Naive thymus-derived CD4-positive, alpha-beta T cell (primary cell): ENCODE measurements at regions of chr1 and their contacts with region 1.

Region 1: DNA sequence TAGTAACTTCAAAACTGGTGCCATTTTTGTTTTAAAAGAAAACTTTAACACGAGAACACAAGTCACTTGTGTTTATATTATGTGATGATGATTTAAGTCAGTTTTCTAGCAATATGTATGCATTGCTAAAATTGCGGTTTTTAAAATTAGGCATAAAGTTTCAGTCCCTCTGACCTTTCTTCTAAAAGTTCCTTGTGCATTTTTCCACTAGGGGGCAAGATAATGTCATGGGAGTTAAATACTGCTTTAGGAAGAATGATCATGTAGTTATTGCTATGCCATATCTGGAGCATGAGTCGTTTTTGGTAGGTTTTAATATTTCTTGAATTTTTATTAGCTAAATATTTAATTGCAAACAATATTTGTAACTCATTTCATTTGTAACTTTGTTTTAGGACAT is 10.7 kb downstream of the CDC7 start:
- DNase-seq: peak in 6 of 9 donors; percentile 22 to 56 (median 43)
- ATAC-seq: peak; percentile 49
- H3K4me3 ChIP-seq: no peak overlapping the region
- H3K4me3 Mint-ChIP-seq: no peak overlapping the region
- H3K27ac ChIP-seq: no peak overlapping the region
- H3K27ac Mint-ChIP-seq: no peak overlapping the region
- H3K4me1 ChIP-seq: peaks cover 0 to 14% of the 10 kb centered on the region in 2 donors
- H3K4me1 Mint-ChIP-seq: peaks cover 0 to 16% (median 5%) of the 10 kb centered on the region in 7 donors
- H3K27me3 ChIP-seq: no peaks in the 10 kb centered on the region
- H3K27me3 Mint-ChIP-seq: no peaks in the 10 kb centered on the region

Region 2: GRCh38 chr1:91523482-91523881 is 12.1 kb after region 1 on chr1:
- CTCF ChIA-PET with region 1: interaction called, 14 read pairs
- POLR2A ChIA-PET with region 1: no interaction called
- intact Hi-C with region 1: no loop called
- DNase-seq: peak in 1 of 9 donors; percentile 32
- ATAC-seq: peak; percentile 51
- H3K4me3 ChIP-seq: no peak overlapping the region
- H3K4me3 Mint-ChIP-seq: no peak overlapping the region
- H3K27ac ChIP-seq: no peak overlapping the region
- H3K27ac Mint-ChIP-seq: peak overlapping the region in 3 of 9 donors; percentile 8 to 76 (median 19)
- H3K4me1 ChIP-seq: peaks cover 0 to 3% of the 10 kb centered on the region in 2 donors
- H3K4me1 Mint-ChIP-seq: peaks cover 5 to 31% (median 10%) of the 10 kb centered on the region in 7 donors
- H3K27me3 ChIP-seq: no peaks in the 10 kb centered on the region
- H3K27me3 Mint-ChIP-seq: no peaks in the 10 kb centered on the region

Region 3: GRCh38 chr1:91684481-91685196 is 173.3 kb after region 1 on chr1:
- CTCF ChIA-PET with region 1: no interaction called
- POLR2A ChIA-PET with region 1: no interaction called
- intact Hi-C with region 1: loop called in 1 of 2 experiments (anchors 5 kb)
- DNase-seq: peak in 6 of 9 donors; percentile 5 to 44 (median 22)
- ATAC-seq: peak; percentile 70
- H3K4me3 ChIP-seq: no peak overlapping the region
- H3K4me3 Mint-ChIP-seq: peak overlapping the region in 8 of 10 donors; percentile 39 to 64 (median 54)
- H3K27ac ChIP-seq: no peak overlapping the region
- H3K27ac Mint-ChIP-seq: peak overlapping the region; percentile 16 to 90 (median 81)
- H3K4me1 ChIP-seq: peaks cover 12 to 20% of the 10 kb centered on the region in 2 donors
- H3K4me1 Mint-ChIP-seq: peaks cover 13 to 52% (median 24%) of the 10 kb centered on the region in 7 donors
- H3K27me3 ChIP-seq: no peaks in the 10 kb centered on the region
- H3K27me3 Mint-ChIP-seq: no peaks in the 10 kb centered on the region

Region 4: GRCh38 chr1:91712981-91713841 is 201.8 kb after region 1 on chr1:
- CTCF ChIA-PET with region 1: no interaction called
- POLR2A ChIA-PET with region 1: no interaction called
- intact Hi-C with region 1: loop called in 1 of 2 experiments (anchors 5 kb)
- DNase-seq: peak in 1 of 9 donors; percentile 60
- ATAC-seq: peak; percentile 86
- H3K4me3 ChIP-seq: no peak overlapping the region
- H3K4me3 Mint-ChIP-seq: peak overlapping the region in 3 of 10 donors; percentile 37 to 57 (median 48)
- H3K27ac ChIP-seq: no peak overlapping the region
- H3K27ac Mint-ChIP-seq: peak overlapping the region in 3 of 9 donors; percentile 24 to 71 (median 66)
- H3K4me1 ChIP-seq: peaks cover 0 to 16% of the 10 kb centered on the region in 2 donors
- H3K4me1 Mint-ChIP-seq: peaks cover 0 to 48% (median 11%) of the 10 kb centered on the region in 7 donors
- H3K27me3 ChIP-seq: no peaks in the 10 kb centered on the region
- H3K27me3 Mint-ChIP-seq: no peaks in the 10 kb centered on the region

Region 5: GRCh38 chr1:91929250-91929649 is 417.9 kb after region 1 on chr1:
- CTCF ChIA-PET with region 1: interaction called, 106 read pairs
- POLR2A ChIA-PET with region 1: no interaction called
- intact Hi-C with region 1: loop called (anchors 1 kb)
- DNase-seq: no peak
- ATAC-seq: no peak
- H3K4me3 ChIP-seq: no peak overlapping the region
- H3K4me3 Mint-ChIP-seq: no peak overlapping the region
- H3K27ac ChIP-seq: no peak overlapping the region
- H3K27ac Mint-ChIP-seq: no peak overlapping the region
- H3K4me1 ChIP-seq: peaks cover 0 to 3% of the 10 kb centered on the region in 2 donors
- H3K4me1 Mint-ChIP-seq: peaks cover 0 to 5% (median 0%) of the 10 kb centered on the region in 7 donors
- H3K27me3 ChIP-seq: no peaks in the 10 kb centered on the region
- H3K27me3 Mint-ChIP-seq: no peaks in the 10 kb centered on the region